GM10248 (cell line): ENCODE measurements at regions of chr10 and their contacts with region 1.

Region 1: GRCh38 chr10:63157845-63158624 is 24.9 kb downstream of the NRBF2 start:
- DNase-seq: peak; percentile 62
- CTCF ChIP-seq: peak; percentile 64

Region 2: GRCh38 chr10:62437696-62438095 is 720.3 kb before region 1 on chr10:
- CTCF ChIA-PET with region 1: interaction called, 47 read pairs
- POLR2A ChIA-PET with region 1: no interaction called
- DNase-seq: peak; percentile 30
- CTCF ChIP-seq: peak; percentile 68

Region 3: GRCh38 chr10:62554632-62555199 is 603.3 kb before region 1 on chr10:
- CTCF ChIA-PET with region 1: interaction called, 22 read pairs
- POLR2A ChIA-PET with region 1: no interaction called
- DNase-seq: peak; percentile 31
- CTCF ChIP-seq: peak; percentile 28

Region 4: DNA sequence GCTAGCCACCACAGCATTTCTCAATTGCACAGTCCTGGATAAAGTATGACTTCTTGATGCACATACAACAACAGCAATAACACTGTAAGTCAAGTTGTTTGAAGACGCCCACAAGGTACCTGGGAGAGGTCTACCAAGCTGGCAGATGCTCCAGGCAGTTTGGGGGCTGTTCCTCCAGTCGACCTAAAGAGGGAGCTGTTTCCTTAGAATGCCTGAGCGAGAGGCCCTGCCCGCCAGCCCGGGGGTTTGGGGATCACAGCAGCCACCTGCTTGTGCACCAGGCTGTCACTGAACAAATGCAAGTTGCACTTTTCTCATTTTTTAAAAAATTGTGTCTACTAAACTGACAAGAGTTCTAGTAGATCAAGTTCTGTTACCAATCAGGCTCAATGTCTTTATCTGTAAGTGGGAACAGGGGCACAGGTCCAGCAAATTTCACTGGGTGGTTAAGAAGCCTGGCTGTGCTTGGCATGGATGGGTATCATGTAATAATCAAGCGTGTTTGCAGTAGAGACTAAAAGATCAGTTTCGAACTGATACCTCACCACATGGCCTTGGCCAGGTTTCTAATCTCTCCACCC is 547.3 kb before region 1 on chr10:
- CTCF ChIA-PET with region 1: interaction called, 38 read pairs
- POLR2A ChIA-PET with region 1: no interaction called
- DNase-seq: peak; percentile 88
- CTCF ChIP-seq: peak; percentile 86

Region 5: DNA sequence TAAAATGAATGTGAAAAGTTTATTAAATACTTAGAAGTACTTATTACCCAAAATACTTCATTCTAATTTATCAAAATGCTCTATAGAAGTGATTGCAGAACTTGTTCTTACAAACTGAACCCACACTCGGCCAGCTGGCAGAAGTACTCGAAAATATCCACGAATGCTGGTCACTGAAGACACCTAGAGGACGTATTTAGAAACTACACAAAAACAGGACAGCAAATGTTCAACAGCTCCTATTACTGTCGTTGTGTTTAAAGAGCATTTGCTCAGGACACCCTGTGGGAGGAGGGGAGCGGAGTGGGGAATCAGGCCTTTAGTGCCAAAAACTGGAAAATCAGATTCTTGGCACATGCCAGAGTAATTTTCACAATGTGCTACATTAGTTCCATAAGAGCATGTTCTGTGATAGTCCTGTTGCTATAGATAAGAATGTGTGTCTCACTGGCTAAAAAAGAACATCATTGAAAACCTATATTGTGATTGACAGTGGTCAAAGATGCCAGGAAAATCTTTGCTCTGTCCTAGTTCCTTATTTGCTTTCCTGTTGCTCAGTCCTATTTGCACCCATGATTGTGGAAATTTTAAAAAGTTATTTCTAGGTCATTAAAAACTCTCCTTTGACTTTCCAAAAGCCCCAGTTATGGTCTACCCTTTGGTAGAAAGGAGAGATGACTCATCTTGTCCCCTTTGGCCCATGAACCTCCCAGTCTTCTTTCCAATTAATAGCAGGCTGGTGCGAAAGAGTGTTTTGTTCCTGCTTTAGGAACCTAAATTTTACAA is 73.9 kb before region 1 on chr10:
- CTCF ChIA-PET with region 1: interaction called, 14 read pairs
- POLR2A ChIA-PET with region 1: no interaction called
- DNase-seq: peak; percentile 56
- CTCF ChIP-seq: peak; percentile 61

Region 6: GRCh38 chr10:63140077-63140476 is 18.0 kb before region 1 on chr10:
- CTCF ChIA-PET with region 1: interaction called, 82 read pairs
- POLR2A ChIA-PET with region 1: interaction called, 3 read pairs
- DNase-seq: no peak
- CTCF ChIP-seq: no peak

Region 7: DNA sequence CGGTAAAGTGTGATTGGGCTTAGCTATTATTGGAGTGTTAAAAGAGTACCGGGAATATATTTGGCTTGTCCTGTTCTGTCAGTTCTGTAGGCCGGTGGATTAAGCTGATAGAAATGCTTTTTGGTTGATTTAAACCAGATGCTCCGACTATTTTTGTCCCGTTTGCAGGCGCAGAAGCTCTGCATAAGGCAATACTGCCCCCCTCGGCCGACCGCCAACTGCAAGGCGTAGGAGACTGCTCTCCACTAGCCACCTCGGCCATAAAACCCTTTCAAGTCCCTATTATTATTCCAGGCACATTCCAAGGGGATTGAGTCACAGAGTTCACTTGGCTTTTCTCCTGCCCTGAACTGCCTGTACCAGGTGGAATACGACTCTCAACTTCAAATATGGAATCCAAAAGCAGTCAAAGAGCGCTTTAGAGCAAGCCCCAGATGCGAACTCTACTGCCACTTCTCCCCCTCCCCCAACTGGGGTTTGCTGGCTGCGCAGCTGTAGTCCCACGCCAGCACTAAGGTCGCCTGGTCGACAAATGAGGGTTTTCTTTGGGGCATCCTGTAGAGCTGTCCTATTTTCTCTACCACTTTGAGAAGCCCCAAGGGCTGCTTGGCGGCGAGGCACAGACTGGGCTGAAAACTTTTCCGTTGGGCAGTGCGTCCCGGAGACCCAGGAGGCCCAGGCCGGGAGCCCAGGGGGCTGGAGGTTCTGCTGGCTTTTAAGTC is 471.5 kb after region 1 on chr10:
- CTCF ChIA-PET with region 1: interaction called, 18 read pairs
- POLR2A ChIA-PET with region 1: no interaction called
- DNase-seq: peak; percentile 73
- CTCF ChIP-seq: peak; percentile 87